ENCODE measurements at regions of chr19 and their contacts with region 1.

Region 1: DNA sequence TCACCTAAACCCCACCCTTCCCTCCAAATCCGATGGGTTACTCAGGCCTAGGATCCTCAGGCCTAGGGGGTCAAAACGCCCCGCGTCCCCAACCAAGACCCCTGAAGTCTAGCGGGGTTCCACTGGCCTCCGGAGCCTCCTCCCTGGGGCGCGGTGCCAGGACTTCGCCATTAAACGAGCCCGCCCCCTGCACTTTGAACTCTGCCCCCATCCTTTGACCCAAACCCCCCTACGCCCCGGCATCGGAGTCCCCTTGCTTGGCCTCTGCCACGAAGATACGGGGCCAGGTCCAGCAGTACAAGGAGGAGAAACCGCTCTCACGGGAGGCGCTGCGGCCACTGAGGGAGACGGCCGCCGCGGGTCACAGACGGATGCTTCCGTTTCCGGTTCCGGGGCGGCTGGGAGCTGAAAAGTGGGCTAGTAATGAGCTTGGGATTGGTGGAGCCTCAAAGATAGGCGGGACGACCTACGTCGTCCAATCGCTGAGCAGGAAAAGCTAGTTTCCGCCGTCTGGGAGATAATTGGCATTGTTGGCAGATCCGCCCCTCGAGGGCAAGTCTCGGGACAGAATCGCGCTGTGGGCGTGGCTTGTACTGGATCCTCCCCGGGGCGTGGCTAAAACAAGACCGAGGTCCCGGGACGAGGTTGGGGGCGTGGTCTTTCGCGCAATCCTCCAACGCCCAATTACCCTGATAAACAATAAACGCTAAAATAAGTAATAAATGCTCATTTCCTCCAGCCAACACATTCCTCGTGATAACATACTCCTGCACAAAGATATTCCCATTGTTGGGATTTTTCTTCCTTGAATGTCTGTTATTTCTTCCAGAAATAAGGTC is 5.7 kb upstream of the ZNF77 start:
- DNase-seq: peak; percentile 95 to 100
- H3K4me3 ChIP-seq: peak overlapping the region; percentile 56
- H3K27ac ChIP-seq: peak overlapping the region; percentile 59
- H3K4me1 ChIP-seq: peaks cover 21% of the 10 kb centered on the region
- H3K27me3 ChIP-seq: no peaks in the 10 kb centered on the region
- CTCF ChIP-seq: no peak

Region 2: GRCh38 chr19:2887391-2887914 is 63.1 kb before region 1 on chr19:
- CTCF ChIA-PET with region 1: interaction called, 5 read pairs
- POLR2A ChIA-PET with region 1: no interaction called
- intact Hi-C with region 1: loop called (anchors 5 kb)
- DNase-seq: peak in 1 of 2 experiments; percentile 58
- H3K4me3 ChIP-seq: no peak overlapping the region
- H3K27ac ChIP-seq: no peak overlapping the region
- H3K4me1 ChIP-seq: no peaks in the 10 kb centered on the region
- H3K27me3 ChIP-seq: peaks cover 29% of the 10 kb centered on the region
- CTCF ChIP-seq: peak; percentile 61

Region 3: GRCh38 chr19:2992958-2993357 is 42.5 kb after region 1 on chr19:
- CTCF ChIA-PET with region 1: no interaction called
- POLR2A ChIA-PET with region 1: no interaction called
- intact Hi-C with region 1: no loop called
- DNase-seq: no peak
- H3K4me3 ChIP-seq: no peak overlapping the region
- H3K27ac ChIP-seq: no peak overlapping the region
- H3K4me1 ChIP-seq: no peaks in the 10 kb centered on the region
- H3K27me3 ChIP-seq: no peaks in the 10 kb centered on the region
- CTCF ChIP-seq: no peak

Region 4: GRCh38 chr19:3035542-3036118 is 85.1 kb after region 1 on chr19:
- CTCF ChIA-PET with region 1: no interaction called
- POLR2A ChIA-PET with region 1: interaction called, 4 read pairs
- intact Hi-C with region 1: loop called (anchors 5 kb)
- DNase-seq: peak; percentile 89 to 95
- H3K4me3 ChIP-seq: peak overlapping the region; percentile 72
- H3K27ac ChIP-seq: peak overlapping the region; percentile 52; the same call in 1 of the 2 replicates
- H3K4me1 ChIP-seq: peaks cover 8% of the 10 kb centered on the region; the same call in 1 of the 2 replicates
- H3K27me3 ChIP-seq: no peaks in the 10 kb centered on the region
- CTCF ChIP-seq: no peak

Region 5: GRCh38 chr19:3108775-3109174 is 158.3 kb after region 1 on chr19:
- CTCF ChIA-PET with region 1: no interaction called
- POLR2A ChIA-PET with region 1: no interaction called
- intact Hi-C with region 1: loop called (anchors 10 kb)
- DNase-seq: peak in 1 of 2 experiments; percentile 31
- H3K4me3 ChIP-seq: no peak overlapping the region
- H3K27ac ChIP-seq: no peak overlapping the region
- H3K4me1 ChIP-seq: no peaks in the 10 kb centered on the region
- H3K27me3 ChIP-seq: no peaks in the 10 kb centered on the region
- CTCF ChIP-seq: peak; percentile 84

Region 6: GRCh38 chr19:3185482-3186376 is 235.2 kb after region 1 on chr19 and contains the start of gene NCLN:
- CTCF ChIA-PET with region 1: no interaction called
- POLR2A ChIA-PET with region 1: no interaction called
- intact Hi-C with region 1: loop called (anchors 1 kb)
- DNase-seq: peak; percentile 74 to 87
- H3K4me3 ChIP-seq: peak within 1 kb of the TSS; percentile 73
- H3K27ac ChIP-seq: no peak within 1 kb of the TSS
- H3K4me1 ChIP-seq: 0 out of 2 replicates have a peak, but pooled peaks cover 8% of the 10 kb centered on the region
- H3K27me3 ChIP-seq: no peaks in the 10 kb centered on the region
- CTCF ChIP-seq: no peak
- total RNA-seq, gene NCLN: 46.0 and 61.4 TPM in 2 replicates